ENCODE measurements at regions of chr2 and their contacts with region 1.

Region 1: GRCh38 chr2:8303322-8303832 is 378.5 kb upstream of the ID2 start:
- DNase-seq: peak; percentile 94
- H3K4me3 Mint-ChIP-seq: peak overlapping the region; percentile 71
- H3K27ac Mint-ChIP-seq: peak overlapping the region; percentile 83
- H3K4me1 Mint-ChIP-seq: peaks cover 72% of the 10 kb centered on the region
- H3K27me3 Mint-ChIP-seq: no peaks in the 10 kb centered on the region

Region 2: DNA sequence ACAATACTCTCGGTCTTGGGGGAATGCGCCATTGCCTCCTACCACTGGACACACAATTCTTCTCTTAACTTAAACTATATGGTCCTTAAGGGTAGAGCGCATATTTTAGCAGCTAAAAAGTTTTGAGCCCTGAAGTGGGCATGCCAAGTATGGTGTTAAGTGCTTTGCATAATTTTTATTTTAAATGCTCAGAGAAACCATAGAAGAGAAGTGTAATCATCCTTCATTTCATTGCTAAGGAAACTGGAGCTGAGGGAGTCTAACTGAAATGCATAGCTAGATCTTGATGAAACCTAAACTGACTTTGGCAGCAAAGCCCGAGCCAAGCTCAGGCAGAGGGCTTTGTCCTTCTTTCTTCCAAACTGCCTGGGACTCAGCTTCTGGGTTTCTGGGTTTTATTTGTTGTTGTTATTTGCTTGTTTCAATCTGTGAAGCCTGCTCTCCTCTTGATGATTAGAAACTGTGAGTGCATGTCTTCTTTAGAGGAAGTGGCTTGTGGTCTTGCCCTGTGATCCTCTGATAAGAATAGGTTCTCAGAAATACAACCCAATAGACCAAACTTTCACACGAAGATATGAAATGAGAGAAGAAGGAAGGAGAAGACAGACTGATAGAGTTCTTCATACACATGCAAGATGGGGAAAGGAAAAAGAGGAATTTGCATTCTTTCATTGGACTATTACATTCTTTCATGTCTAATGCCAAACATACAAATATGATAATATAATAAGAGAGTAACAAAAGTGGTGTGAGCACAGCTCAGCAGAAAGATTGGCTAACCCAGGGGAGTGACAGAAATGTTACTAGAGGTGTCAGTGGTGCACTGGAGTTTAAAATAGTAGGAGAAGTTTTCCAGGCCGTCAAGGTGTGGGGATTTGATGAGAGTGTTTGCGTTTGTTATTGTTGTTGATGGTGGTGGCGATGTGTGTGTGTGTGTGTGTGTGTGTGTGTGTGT is 1393.7 kb before region 1 on chr2:
- intact Hi-C with region 1: loop called (anchors 10 kb)
- DNase-seq: peak; percentile 91
- H3K4me3 Mint-ChIP-seq: peak overlapping the region; percentile 81
- H3K27ac Mint-ChIP-seq: peak overlapping the region; percentile 91
- H3K4me1 Mint-ChIP-seq: peaks cover 78% of the 10 kb centered on the region
- H3K27me3 Mint-ChIP-seq: peaks cover under 1% of the 10 kb centered on the region

Region 3: GRCh38 chr2:7845332-7845731 is 458.0 kb before region 1 on chr2:
- intact Hi-C with region 1: loop called (anchors 5 kb)
- DNase-seq: peak; percentile 52
- H3K4me3 Mint-ChIP-seq: no peak overlapping the region
- H3K27ac Mint-ChIP-seq: peak overlapping the region; percentile 76
- H3K4me1 Mint-ChIP-seq: peaks cover 42% of the 10 kb centered on the region
- H3K27me3 Mint-ChIP-seq: no peaks in the 10 kb centered on the region

Region 4: DNA sequence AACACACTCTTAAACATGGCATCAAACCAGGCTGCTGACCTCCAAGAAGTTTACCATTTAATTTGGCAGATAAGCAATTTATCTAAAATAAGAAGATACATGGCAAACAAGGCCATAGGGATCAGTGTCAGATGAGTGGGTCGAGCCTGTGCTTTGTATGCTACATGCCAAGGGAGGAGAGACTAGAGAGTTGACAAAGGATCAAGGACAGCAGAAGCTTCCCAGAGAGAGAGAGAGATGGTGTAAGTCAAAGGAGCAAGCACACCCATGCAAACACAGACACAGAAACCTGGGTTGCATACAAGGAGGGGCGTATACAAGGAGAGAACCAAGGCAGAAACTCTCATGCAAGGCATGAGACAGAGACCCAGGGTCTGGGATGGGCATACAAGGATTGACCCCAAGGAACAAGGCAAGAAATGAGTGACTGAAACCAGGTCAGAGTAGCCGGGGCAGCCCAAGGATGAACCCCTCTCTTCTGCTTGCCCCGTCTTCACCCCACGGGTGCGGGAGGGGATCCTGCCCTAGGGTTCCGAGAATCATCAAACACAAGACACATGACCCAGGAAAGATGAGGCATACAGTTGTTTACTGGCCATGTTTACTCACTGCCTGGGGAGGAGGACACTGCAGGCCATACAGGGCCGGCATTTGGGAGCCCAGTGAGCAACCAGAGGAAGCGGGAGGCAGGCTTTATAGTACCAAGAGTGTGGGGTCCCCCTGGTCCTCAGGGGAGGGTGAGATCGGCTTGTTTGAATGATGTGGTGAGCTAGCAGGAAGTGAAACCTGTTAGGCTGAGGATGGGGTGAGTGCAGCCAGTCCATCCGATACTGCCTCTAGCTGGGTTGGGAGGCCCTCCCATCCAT is 150.8 kb before region 1 on chr2:
- intact Hi-C with region 1: loop called (anchors 5 kb)
- DNase-seq: peak; percentile 49
- H3K4me3 Mint-ChIP-seq: no peak overlapping the region
- H3K27ac Mint-ChIP-seq: peak overlapping the region; percentile 12
- H3K4me1 Mint-ChIP-seq: peaks cover 26% of the 10 kb centered on the region
- H3K27me3 Mint-ChIP-seq: no peaks in the 10 kb centered on the region

Region 5: DNA sequence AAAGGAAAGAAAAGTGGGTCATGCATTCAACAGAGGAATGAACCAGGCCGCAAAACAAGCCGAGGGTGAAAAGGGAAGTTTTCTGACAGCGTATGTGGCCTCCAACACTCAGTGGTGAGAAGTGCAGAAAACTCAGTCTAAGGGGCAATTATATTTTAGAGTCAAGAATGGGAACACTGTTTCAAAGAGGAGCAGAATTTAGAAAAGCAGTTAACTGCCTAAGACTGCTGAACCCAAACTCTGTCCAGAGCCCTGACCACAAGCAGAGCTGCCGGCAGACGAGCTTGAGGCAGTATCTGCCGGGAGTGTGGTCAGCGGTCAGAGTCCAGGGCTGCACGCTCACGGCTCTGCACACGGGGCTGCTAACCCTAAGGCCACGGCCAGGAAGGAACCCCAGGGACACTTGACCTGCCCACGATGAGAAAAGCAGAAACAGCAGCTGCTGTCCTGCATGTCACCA is 31.5 kb after region 1 on chr2:
- intact Hi-C with region 1: loop called (anchors 1 kb)
- DNase-seq: no peak
- H3K4me3 Mint-ChIP-seq: no peak overlapping the region
- H3K27ac Mint-ChIP-seq: no peak overlapping the region
- H3K4me1 Mint-ChIP-seq: peaks cover 19% of the 10 kb centered on the region
- H3K27me3 Mint-ChIP-seq: peaks cover 11% of the 10 kb centered on the region

Region 6: DNA sequence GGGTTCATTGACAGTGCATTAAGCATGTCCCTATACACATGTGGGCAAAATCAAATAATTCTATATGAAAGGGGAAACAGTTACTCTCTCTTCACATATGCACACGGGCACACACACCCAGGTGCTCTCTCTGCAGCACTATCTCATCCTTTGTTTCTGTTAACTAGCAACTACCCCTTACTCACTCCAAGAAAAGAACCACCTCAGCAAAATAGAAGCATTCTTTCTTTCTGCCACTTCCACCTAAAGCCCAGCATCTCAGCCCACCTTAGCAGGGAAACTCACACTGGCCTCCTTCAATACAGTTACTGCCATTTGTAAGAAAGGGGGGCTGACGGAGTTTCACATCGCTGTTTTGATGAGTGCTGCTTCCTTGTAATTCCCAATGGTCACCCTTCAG is 162.2 kb after region 1 on chr2:
- intact Hi-C with region 1: no loop called
- DNase-seq: no peak
- H3K4me3 Mint-ChIP-seq: no peak overlapping the region
- H3K27ac Mint-ChIP-seq: no peak overlapping the region
- H3K4me1 Mint-ChIP-seq: peaks cover 30% of the 10 kb centered on the region
- H3K27me3 Mint-ChIP-seq: no peaks in the 10 kb centered on the region

Region 7: GRCh38 chr2:8514796-8515758 is 211.7 kb after region 1 on chr2:
- intact Hi-C with region 1: loop called (anchors 1 kb)
- DNase-seq: peak; percentile 87
- H3K4me3 Mint-ChIP-seq: peak overlapping the region; percentile 58
- H3K27ac Mint-ChIP-seq: peak overlapping the region; percentile 96
- H3K4me1 Mint-ChIP-seq: peaks cover 63% of the 10 kb centered on the region
- H3K27me3 Mint-ChIP-seq: no peaks in the 10 kb centered on the region

Measured in activated CD4-positive, alpha-beta T cell treated with anti-CD3 and anti-CD28 coated beads, Interleukin-2, amount 10 ng/mL, durations not matched to agents 24 days and 14 days (primary cell).